Transverse colon (tissue), 4 donors: ENCODE measurements at regions of chrX and their contacts with region 1.

Region 1: GRCh38 chrX:124887572-124887971 is 432.1 kb upstream of the TEX13C start:
- DNase-seq: no peak
- H3K4me3 ChIP-seq: no peak overlapping the region
- H3K27ac ChIP-seq: no peak overlapping the region
- H3K4me1 ChIP-seq: no peaks in the 10 kb centered on the region
- H3K27me3 ChIP-seq: no peaks in the 10 kb centered on the region
- CTCF ChIP-seq: no peak
- EP300 ChIP-seq: no peak
- POLR2A ChIP-seq: no peak

Region 2: GRCh38 chrX:124504111-124504983 is 383.2 kb before region 1 on chrX:
- in situ Hi-C with region 1: no loop called
- intact Hi-C with region 1: no loop called
- DNase-seq: no peak
- H3K4me3 ChIP-seq: no peak overlapping the region
- H3K27ac ChIP-seq: no peak overlapping the region
- H3K4me1 ChIP-seq: no peaks in the 10 kb centered on the region
- H3K27me3 ChIP-seq: no peaks in the 10 kb centered on the region
- CTCF ChIP-seq: no peak
- EP300 ChIP-seq: no peak
- POLR2A ChIP-seq: no peak

Region 3: GRCh38 chrX:124726881-124727280 is 160.7 kb before region 1 on chrX:
- in situ Hi-C with region 1: no loop called
- intact Hi-C with region 1: no loop called
- DNase-seq: no peak
- H3K4me3 ChIP-seq: no peak overlapping the region
- H3K27ac ChIP-seq: no peak overlapping the region
- H3K4me1 ChIP-seq: no peaks in the 10 kb centered on the region
- H3K27me3 ChIP-seq: no peaks in the 10 kb centered on the region
- CTCF ChIP-seq: no peak
- EP300 ChIP-seq: no peak
- POLR2A ChIP-seq: no peak

Region 4: DNA sequence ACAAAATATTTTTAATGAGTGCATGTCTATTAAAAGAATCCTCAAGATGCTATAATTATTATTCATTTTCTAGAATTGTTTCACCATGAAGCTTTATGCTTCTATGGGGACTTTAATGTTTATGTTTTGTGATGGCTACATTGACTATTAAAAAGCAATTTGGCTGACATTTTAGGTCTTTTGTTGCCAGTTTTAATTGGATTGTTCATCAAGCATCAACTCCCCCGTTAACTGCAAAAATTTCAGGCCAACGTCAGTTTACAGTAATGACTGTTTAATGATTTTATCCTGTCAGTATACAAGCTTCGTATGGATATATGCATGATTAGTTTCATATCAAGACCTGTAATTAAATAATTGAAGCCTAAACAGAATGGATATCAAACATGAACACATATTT is 118.4 kb before region 1 on chrX:
- in situ Hi-C with region 1: no loop called
- intact Hi-C with region 1: no loop called
- DNase-seq: no peak
- H3K4me3 ChIP-seq: no peak overlapping the region
- H3K27ac ChIP-seq: no peak overlapping the region
- H3K4me1 ChIP-seq: no peaks in the 10 kb centered on the region
- H3K27me3 ChIP-seq: no peaks in the 10 kb centered on the region
- CTCF ChIP-seq: no peak
- EP300 ChIP-seq: no peak
- POLR2A ChIP-seq: no peak

Region 5: GRCh38 chrX:124842205-124842604 is 45.4 kb before region 1 on chrX:
- in situ Hi-C with region 1: no loop called
- intact Hi-C with region 1: loop called (anchors 2 kb)
- DNase-seq: no peak
- H3K4me3 ChIP-seq: no peak overlapping the region
- H3K27ac ChIP-seq: no peak overlapping the region
- H3K4me1 ChIP-seq: no peaks in the 10 kb centered on the region
- H3K27me3 ChIP-seq: no peaks in the 10 kb centered on the region
- CTCF ChIP-seq: no peak
- EP300 ChIP-seq: no peak
- POLR2A ChIP-seq: no peak